ENCODE measurements at regions of chr2 and their contacts with region 1.

Region 1: GRCh38 chr2:177467646-177468045 is 75.1 kb downstream of the AGPS start:
- DNase-seq: peak; percentile 76
- ATAC-seq: peak; percentile 80; the same call in 1 of the 2 replicates
- H3K4me3 ChIP-seq: no peak overlapping the region
- H3K27ac ChIP-seq: no peak overlapping the region
- H3K4me1 ChIP-seq: no peaks in the 10 kb centered on the region; the same call in 1 of the 2 replicates
- H3K27me3 ChIP-seq: no peaks in the 10 kb centered on the region
- CTCF ChIP-seq: no peak
- POLR2A ChIP-seq: no peak
- RAD21 ChIP-seq: no peak

Region 2: GRCh38 chr2:176398243-176399073 is 1069.2 kb before region 1 on chr2:
- CTCF ChIA-PET with region 1: no interaction called
- POLR2A ChIA-PET with region 1: interaction called, 17 read pairs
- dilution Hi-C with region 1: no loop called
- in situ Hi-C with region 1: no loop called
- intact Hi-C with region 1: no loop called
- DNase-seq: peak; percentile 59
- ATAC-seq: peak; percentile 77
- H3K4me3 ChIP-seq: no peak overlapping the region
- H3K27ac ChIP-seq: no peak overlapping the region
- H3K4me1 ChIP-seq: no peaks in the 10 kb centered on the region
- H3K27me3 ChIP-seq: no peaks in the 10 kb centered on the region; the same call in 1 of the 2 replicates
- CTCF ChIP-seq: no peak
- POLR2A ChIP-seq: no peak
- RAD21 ChIP-seq: no peak

Region 3: DNA sequence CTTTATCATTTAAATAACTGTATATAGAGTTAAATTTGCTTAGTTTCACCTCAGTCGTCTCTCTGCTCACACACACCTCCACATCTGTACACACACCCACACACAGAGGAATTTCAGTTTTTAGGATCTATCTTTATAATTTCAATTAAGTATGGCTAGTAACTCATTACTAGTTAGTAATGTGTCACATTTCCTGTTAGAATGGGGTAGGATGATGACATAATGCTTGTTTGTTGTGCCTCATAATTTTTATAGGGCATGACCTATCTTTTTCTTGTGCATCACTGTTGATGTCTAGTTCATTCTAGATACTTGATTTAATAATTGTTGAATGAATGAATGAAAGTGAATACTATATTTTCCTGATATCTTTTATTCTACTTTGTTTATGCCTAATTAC is 33.5 kb after region 1 on chr2:
- CTCF ChIA-PET with region 1: no interaction called
- POLR2A ChIA-PET with region 1: no interaction called
- dilution Hi-C with region 1: no loop called
- in situ Hi-C with region 1: no loop called
- intact Hi-C with region 1: loop called (anchors 5 kb)
- DNase-seq: no peak
- ATAC-seq: no peak
- H3K4me3 ChIP-seq: no peak overlapping the region
- H3K27ac ChIP-seq: no peak overlapping the region
- H3K4me1 ChIP-seq: no peaks in the 10 kb centered on the region
- H3K27me3 ChIP-seq: no peaks in the 10 kb centered on the region
- CTCF ChIP-seq: no peak
- POLR2A ChIP-seq: no peak
- RAD21 ChIP-seq: no peak